ENCODE measurements at regions of chr1 and their contacts with region 1.

Region 1: GRCh38 chr1:207336559-207337467 is 15.3 kb downstream of the CD55 start:
- DNase-seq: peak; percentile 88
- ATAC-seq: peak; percentile 78
- H3K4me3 Mint-ChIP-seq: peak overlapping the region; percentile 51
- H3K27ac Mint-ChIP-seq: peak overlapping the region; percentile 93
- H3K4me1 Mint-ChIP-seq: peaks cover 71% of the 10 kb centered on the region
- H3K27me3 Mint-ChIP-seq: no peaks in the 10 kb centered on the region

Region 2: GRCh38 chr1:207362962-207363858 is 26.4 kb after region 1 on chr1:
- CTCF ChIA-PET with region 1: interaction called, 18 read pairs
- POLR2A ChIA-PET with region 1: interaction called, 3 read pairs
- DNase-seq: peak; percentile 32
- ATAC-seq: peak; percentile 93
- H3K4me3 Mint-ChIP-seq: no peak overlapping the region
- H3K27ac Mint-ChIP-seq: no peak overlapping the region
- H3K4me1 Mint-ChIP-seq: no peaks in the 10 kb centered on the region
- H3K27me3 Mint-ChIP-seq: no peaks in the 10 kb centered on the region

Region 3: DNA sequence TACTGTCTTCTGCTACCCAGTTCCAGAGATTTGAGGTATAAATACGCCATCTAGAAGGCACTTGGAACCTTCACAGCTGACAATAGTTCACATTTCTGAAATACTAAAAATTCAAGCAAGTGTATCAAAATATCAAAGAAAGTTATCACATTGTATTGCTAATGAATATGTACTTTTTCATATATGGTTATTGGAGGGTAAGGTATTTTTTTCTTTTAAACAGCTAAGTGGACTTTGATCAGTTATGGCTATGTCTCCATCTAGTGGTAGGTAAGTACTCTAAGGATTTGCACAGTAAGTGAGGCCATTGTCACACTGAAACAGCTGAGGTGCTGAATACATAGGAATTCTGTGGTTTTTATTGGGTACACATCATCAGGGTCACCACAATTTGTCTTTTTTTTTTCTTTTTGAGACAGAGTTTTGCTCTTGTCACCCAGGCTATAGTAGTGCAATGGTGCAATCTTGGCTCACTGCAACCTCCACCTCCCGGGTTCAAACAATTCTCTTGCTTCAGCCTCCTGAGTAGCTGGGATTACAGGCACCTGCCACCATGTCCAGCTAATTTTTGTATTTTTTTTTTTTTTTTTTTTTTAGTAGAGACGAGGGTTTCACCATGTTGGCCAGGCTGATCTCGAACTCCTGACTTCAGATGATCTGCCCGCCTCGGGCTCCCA is 68.2 kb after region 1 on chr1:
- CTCF ChIA-PET with region 1: interaction called, 10 read pairs
- POLR2A ChIA-PET with region 1: interaction called, 5 read pairs
- DNase-seq: no peak
- ATAC-seq: peak; percentile 86
- H3K4me3 Mint-ChIP-seq: no peak overlapping the region
- H3K27ac Mint-ChIP-seq: no peak overlapping the region
- H3K4me1 Mint-ChIP-seq: peaks cover 11% of the 10 kb centered on the region
- H3K27me3 Mint-ChIP-seq: peaks cover 3% of the 10 kb centered on the region

Measured in activated CD8-positive, alpha-beta T cell treated with anti-CD3 and anti-CD28 coated beads, Interleukin-2, amount 10 ng/mL, durations not matched to agents 7 days and 5 days (primary cell).